OCI-LY7 (cell line): ENCODE measurements at regions of chr16 and their contacts with region 1.

Region 1: DNA sequence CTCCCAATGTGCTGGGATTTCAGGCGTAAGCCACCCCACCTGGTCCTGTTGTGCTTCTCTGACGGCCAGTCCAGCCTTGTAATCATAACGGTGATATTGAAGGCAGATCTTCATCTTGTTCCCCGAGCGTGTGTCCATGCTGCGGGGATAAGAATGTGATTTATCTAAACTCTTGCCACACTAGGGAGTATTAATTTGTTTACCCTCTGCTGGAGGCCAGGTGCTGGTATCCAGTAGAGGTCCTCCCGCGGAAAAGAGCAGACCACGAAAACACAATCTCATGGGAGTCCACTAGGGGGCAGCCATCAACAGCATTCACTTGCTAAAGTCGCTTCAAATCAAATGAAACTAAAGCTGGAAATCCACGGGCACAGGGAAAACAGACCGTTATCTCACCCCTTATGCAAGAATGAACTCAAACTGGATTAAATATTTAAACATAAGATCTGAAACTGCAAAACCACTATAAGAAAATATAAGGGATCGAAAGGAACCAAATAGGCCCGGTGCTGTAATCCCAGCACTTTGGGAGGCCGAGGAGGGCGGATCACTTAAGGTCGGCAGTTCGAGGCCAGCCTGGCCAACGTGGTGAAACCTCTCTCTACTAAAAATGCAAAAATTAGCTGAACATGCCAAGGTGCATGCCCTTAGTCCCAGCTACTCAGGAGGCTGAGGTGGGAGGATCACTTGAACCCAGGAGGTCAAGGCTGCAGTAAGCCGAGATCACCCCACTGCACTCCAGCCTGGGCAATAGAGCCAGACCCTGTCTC is 22.3 kb upstream of the RBBP6 start:
- DNase-seq: peak; percentile 78
- H3K4me3 ChIP-seq: no peak overlapping the region
- H3K27ac ChIP-seq: no peak overlapping the region
- H3K4me1 ChIP-seq: no peaks in the 10 kb centered on the region
- CTCF ChIP-seq: peak; percentile 97

Region 2: GRCh38 chr16:24789881-24790280 is 272.8 kb after region 1 on chr16:
- CTCF ChIA-PET with region 1: no interaction called
- POLR2A ChIA-PET with region 1: no interaction called
- intact Hi-C with region 1: loop called (anchors 5 kb)
- DNase-seq: no peak
- H3K4me3 ChIP-seq: no peak overlapping the region
- H3K27ac ChIP-seq: no peak overlapping the region
- H3K4me1 ChIP-seq: no peaks in the 10 kb centered on the region
- CTCF ChIP-seq: no peak

Region 3: DNA sequence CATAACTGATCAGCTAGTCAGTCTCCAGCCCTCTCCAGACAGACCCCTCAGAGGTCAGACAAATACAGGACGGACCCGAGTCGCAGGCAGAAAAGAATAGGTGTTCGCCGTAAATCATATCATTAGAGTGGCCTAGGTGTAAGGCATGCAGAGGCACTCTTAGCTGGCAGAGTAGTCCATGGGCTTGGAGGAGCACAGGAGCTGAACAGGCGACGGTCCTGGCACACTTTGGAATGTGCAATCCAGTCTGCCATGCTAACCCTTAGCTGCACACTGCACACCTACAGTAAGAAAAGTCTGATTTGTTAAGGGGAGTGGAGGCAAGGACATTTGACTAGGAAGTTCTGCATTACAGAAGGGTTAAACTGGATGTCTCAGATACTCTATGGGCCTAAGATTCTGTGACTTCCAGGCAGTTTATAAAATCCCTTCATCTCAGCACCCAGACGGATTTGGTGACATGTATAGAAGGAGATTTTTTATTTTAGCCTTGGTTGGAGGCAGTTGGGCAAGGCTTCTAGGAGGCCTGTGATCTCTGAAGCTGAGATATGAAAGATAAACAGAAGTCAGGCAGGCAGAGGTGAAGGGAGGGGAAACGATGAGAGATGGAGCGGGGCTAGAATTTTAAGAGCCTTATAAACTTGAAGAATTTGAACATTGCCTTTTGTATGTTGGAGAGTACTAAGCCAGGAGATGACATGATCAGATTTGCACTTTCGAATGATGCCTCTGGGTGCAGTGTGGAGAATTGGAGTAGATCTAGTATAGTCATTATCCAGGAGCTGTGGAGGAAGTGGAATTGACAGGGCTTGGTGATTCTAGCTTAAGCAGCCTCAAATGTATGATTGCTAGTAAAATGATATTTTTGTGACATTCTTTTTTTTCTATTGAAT is 294.1 kb after region 1 on chr16:
- CTCF ChIA-PET with region 1: no interaction called
- POLR2A ChIA-PET with region 1: no interaction called
- intact Hi-C with region 1: loop called (anchors 5 kb)
- DNase-seq: no peak
- H3K4me3 ChIP-seq: no peak overlapping the region
- H3K27ac ChIP-seq: no peak overlapping the region
- H3K4me1 ChIP-seq: no peaks in the 10 kb centered on the region
- CTCF ChIP-seq: no peak